Activated CD4-positive, alpha-beta T cell treated with anti-CD3 and anti-CD28 coated beads for 36 hours (primary cell): ENCODE measurements at regions of chr2 and their contacts with region 1.

Region 1: DNA sequence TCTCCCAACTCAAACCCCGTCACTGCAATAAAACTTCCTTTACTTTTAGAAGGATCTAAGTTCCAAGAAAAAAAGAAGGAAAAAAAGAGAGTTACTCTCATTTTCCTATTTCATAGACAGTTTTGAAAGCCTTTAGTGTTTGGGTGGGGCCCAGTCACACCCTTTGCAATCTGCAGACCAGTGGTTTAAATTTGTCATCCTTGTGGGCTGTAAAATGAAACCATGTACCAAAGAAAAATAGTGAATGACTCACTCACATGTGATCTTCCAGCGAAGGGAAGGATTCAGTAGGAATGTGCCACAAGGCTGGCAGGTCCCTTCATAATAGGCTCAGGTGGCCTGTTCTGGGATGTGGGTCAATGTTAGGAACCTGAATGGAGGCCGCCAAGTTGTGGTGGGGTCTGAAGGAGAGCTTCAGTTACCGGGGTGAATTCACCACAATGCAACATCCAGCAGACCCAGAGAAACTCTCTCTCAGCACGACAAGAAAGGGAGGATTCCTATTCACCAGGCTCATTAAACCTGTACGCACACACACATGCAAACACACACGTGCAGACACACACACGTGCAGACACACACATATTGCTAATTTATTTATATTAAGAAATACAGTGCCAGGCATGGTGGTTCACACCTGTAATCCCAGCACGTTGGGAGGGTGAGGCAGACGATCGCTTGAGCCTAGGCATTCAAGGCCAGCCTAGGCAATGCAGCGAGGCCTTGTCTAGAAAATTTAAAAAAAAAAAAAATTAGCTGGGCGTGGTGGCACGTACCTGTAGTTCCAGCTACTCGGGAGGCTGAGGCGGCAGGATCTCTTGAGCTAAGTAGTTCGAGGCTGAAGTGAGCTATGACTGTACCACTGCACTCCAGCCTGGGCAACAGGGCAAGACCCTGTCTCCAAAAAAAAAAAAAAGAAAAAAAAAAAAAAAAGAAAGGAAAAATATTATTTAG is 28.5 kb downstream of the ANXA4 start:
- DNase-seq: peak; percentile 37
- ATAC-seq: peak; percentile 28
- H3K4me3 Mint-ChIP-seq: no peak overlapping the region
- H3K27ac Mint-ChIP-seq: peak overlapping the region; percentile 38
- H3K4me1 Mint-ChIP-seq: peaks cover 49% of the 10 kb centered on the region
- H3K27me3 Mint-ChIP-seq: no peaks in the 10 kb centered on the region

Region 2: GRCh38 chr2:68577183-68577582 is 1193.3 kb before region 1 on chr2:
- CTCF ChIA-PET with region 1: no interaction called
- POLR2A ChIA-PET with region 1: no interaction called
- intact Hi-C with region 1: no loop called
- DNase-seq: no peak
- ATAC-seq: no peak
- H3K4me3 Mint-ChIP-seq: no peak overlapping the region
- H3K27ac Mint-ChIP-seq: no peak overlapping the region
- H3K4me1 Mint-ChIP-seq: no peaks in the 10 kb centered on the region
- H3K27me3 Mint-ChIP-seq: no peaks in the 10 kb centered on the region

Region 3: DNA sequence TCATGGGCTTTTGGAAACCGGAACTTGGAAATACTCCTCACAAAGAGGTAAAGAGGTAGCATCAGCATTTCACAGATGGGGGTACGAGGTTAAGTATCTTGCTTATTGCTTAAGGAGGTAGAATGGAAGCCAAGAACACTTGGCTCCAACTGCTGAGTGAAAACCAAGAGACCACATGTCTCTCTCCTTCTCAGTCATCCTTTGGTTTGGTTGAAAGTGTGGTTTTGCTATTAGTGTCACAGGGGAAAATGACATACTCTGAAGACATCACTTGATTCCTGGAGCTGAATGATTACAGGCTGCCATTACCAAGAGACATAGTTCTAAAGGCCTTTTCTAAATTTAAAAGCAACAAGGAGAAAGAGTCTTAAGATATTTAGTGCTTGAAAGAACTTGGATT is 716.0 kb before region 1 on chr2:
- CTCF ChIA-PET with region 1: no interaction called
- POLR2A ChIA-PET with region 1: no interaction called
- intact Hi-C with region 1: loop called in 1 of 2 experiments (anchors 10 kb)
- DNase-seq: peak; percentile 21
- ATAC-seq: peak; percentile 99
- H3K4me3 Mint-ChIP-seq: no peak overlapping the region
- H3K27ac Mint-ChIP-seq: no peak overlapping the region
- H3K4me1 Mint-ChIP-seq: peaks cover 8% of the 10 kb centered on the region
- H3K27me3 Mint-ChIP-seq: peaks cover 47% of the 10 kb centered on the region

Region 4: DNA sequence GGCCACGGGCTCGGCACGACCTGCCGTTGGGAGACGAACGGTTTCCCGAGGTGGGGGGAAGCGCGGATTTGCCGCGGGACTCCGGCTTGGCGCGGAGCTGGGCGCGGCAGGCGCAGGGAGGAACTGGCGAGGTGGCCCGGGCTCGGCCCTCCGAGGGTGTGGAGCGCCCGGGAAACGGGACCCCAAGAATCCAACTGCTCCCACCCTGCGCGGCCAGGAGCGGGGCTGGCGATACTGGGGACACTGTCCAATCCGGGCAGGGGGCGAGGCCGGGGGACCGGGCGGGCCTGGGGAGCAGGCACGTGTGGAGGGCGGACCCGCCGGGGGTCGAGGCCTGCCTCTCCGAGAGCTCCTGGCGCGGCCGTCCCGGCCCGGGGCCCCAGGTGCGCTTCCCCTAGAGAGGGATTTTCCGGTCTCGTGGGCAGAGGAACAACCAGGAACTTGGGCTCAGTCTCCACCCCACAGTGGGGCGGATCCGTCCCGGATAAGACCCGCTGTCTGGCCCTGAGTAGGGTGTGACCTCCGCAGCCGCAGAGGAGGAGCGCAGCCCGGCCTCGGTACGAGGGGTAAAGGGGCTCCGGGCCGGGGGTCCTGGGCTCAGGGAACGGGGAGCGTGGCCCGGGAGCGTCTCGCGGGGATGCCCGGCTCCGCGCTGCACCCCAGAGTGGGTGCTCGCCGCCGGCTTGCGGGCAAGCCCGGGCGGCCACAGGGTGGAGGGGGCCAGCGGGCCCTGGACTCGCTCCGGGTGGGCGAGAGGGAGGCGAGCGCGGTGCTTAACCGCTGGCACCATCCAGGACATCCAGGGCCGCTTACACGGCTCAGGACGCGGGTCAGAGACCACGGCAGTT is 28.6 kb before region 1 on chr2 and contains the start of gene ANXA4:
- CTCF ChIA-PET with region 1: interaction called, 4 read pairs
- POLR2A ChIA-PET with region 1: interaction called, 3 read pairs
- intact Hi-C with region 1: loop called in 1 of 2 experiments (anchors 2 kb)
- DNase-seq: peak; percentile 73
- ATAC-seq: peak; percentile 86
- H3K4me3 Mint-ChIP-seq: peak within 1 kb of the TSS; percentile 78
- H3K27ac Mint-ChIP-seq: peak within 1 kb of the TSS; percentile 81
- H3K4me1 Mint-ChIP-seq: peaks cover 11% of the 10 kb centered on the region
- H3K27me3 Mint-ChIP-seq: no peaks in the 10 kb centered on the region
- total RNA-seq, gene ANXA4: 24.8 to 30.7 TPM